PC-9 (cell line): ENCODE measurements at regions of chr5 and their contacts with region 1.

Region 1: GRCh38 chr5:131514316-131515283 is 120.4 kb downstream of the RAPGEF6 start:
- DNase-seq: no peak
- H3K4me3 ChIP-seq: no peak overlapping the region
- H3K27ac ChIP-seq: no peak overlapping the region
- H3K4me1 ChIP-seq: no peaks in the 10 kb centered on the region
- H3K27me3 ChIP-seq: no peaks in the 10 kb centered on the region
- CTCF ChIP-seq: no peak

Region 2: GRCh38 chr5:131466171-131466766 is 48.3 kb before region 1 on chr5:
- CTCF ChIA-PET with region 1: no interaction called
- POLR2A ChIA-PET with region 1: no interaction called
- intact Hi-C with region 1: no loop called
- DNase-seq: no peak
- H3K4me3 ChIP-seq: no peak overlapping the region
- H3K27ac ChIP-seq: no peak overlapping the region
- H3K4me1 ChIP-seq: no peaks in the 10 kb centered on the region
- H3K27me3 ChIP-seq: no peaks in the 10 kb centered on the region
- CTCF ChIP-seq: no peak

Region 3: DNA sequence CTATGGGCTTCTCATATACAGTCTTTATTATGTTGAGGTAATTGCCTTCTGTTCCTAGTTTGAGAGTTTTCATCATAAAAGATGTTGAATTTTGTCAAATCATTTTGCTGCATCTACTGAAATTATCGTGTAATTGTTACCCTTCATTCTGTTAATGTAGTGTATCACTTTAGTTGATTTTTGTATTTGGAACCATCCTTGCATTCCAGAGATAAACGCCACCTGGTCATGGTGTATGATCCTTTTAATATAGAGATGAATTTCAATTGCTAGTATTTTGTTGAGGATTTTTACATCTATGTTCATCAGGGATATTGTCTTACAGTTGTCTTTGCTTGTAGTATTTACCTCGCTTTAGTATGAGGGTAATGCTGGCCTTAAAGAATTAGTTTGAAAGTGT is 411.6 kb after region 1 on chr5:
- CTCF ChIA-PET with region 1: no interaction called
- POLR2A ChIA-PET with region 1: no interaction called
- intact Hi-C with region 1: no loop called
- DNase-seq: no peak
- H3K4me3 ChIP-seq: no peak overlapping the region
- H3K27ac ChIP-seq: no peak overlapping the region
- H3K4me1 ChIP-seq: no peaks in the 10 kb centered on the region
- H3K27me3 ChIP-seq: peaks cover 8% of the 10 kb centered on the region; the same call in 1 of the 2 replicates
- CTCF ChIP-seq: no peak

Region 4: DNA sequence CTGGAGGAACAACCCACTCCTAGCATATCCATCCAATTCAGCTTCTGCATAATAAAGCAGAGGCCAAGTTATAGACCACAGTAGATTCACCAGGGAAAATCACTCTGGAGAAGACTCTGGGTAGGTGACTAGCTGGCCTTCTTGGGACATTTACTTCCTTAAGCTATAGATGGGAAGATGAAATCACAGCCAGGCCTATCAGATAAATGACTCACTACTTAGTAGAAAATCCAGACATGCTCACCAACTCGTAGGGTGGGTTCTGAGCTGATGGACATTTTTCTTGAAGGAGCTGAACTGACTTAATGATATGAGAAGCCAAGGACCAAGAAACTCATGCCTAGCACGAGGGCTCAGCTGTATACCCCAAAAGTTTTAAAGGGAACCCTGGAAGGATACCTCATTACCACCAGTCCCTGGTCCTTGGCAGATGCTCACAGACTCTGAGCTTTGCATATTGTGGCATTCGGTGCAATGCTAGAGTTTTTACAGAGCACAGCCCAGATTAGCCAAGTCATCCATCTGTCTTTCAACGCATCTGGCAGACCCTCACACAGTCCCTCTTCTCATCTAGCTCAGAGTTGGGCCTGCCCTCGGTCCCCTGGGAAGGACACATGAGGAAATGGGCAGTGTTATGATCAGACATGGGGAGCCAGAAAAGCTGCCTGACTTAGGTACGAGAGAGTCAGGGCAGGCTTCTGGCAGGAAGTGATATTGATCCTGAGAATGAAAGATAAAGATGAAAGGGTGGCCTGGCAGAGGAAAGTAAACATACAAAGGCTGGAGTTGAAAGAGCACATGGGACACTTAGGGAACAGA is 481.8 kb after region 1 on chr5:
- CTCF ChIA-PET with region 1: no interaction called
- POLR2A ChIA-PET with region 1: interaction called, 13 read pairs
- intact Hi-C with region 1: no loop called
- DNase-seq: peak in 1 of 2 experiments; percentile 74
- H3K4me3 ChIP-seq: no peak overlapping the region
- H3K27ac ChIP-seq: no peak overlapping the region
- H3K4me1 ChIP-seq: 0 out of 2 replicates have a peak, but pooled peaks cover 3% of the 10 kb centered on the region
- H3K27me3 ChIP-seq: no peaks in the 10 kb centered on the region
- CTCF ChIP-seq: no peak